Esophagus muscularis mucosa (tissue), 4 donors: ENCODE measurements at regions of chr12 and their contacts with region 1.

Region 1: DNA sequence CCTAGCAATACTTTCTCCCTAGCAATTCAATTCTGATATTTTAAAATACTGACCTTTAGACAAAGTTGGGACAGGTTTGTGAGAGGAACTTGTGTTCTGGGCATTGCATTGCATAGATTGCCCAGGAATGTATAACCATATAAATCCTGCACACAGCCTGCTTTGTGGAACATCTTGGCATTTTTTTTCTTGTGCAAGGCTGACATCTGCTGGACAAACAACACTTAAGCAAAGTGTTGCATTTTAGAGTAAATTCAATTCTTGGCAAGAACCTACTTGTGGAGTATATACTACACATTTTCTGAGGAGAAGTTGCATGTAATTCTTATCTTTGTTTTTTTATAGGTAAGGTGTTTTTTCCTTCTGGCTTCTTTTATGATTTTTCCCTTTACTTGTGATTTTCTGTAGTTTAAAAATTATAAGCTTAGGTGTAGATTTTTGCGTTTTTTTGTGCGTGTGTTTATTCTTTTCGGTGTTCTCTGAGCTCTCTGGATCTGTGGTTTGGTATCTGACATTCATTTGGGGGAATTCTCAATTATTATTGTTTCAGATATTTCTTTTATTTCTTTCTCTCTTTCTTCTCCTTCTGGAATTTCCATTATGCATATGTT is 26.4 kb downstream of the TESPA1 start:
- DNase-seq: no peak
- H3K4me3 ChIP-seq: no peak overlapping the region
- H3K27ac ChIP-seq: no peak overlapping the region
- H3K4me1 ChIP-seq: no peaks in the 10 kb centered on the region
- H3K27me3 ChIP-seq: peaks cover 0 to 3% (median 0%) of the 10 kb centered on the region in 4 donors
- CTCF ChIP-seq: peak; percentile 62 to 67 (median 63)
- EP300 ChIP-seq: no peak
- POLR2A ChIP-seq: no peak

Region 2: DNA sequence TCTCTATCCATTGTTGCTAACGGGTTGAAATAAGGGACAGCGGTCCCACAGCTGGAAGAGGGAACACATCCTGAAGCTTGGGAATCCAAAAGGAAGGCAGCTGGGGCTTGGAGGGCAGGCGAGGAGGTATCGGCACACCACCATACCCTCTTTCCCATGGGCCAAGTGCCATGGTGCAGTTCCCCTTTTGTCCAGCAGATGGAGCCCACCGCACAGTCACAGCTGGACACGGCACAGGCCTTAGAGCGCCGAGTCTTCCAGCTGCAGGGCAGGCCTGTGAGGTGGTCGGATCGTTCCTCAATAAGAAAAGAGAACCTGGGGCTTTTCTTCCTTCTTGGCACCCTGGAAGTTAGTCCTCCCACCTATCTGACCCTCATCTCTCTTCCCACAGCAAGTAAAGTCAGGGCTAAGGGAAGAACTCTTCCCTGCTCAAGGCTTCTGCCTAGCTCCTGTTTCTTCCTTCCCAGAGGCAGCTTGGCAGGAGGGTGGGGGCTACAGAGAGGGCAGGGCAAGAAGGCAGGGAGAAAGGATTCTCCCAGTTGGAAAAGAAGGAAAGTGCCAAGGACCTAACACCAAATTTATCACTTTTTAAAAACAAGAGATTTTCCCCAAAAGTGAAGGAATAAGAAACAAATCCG is 378.3 kb before region 1 on chr12:
- intact Hi-C with region 1: loop called (anchors 5 kb)
- DNase-seq: peak; percentile 98
- H3K4me3 ChIP-seq: no peak overlapping the region
- H3K27ac ChIP-seq: peak overlapping the region in 2 of 4 donors; percentile 4 to 13
- H3K4me1 ChIP-seq: peaks cover 0 to 12% (median 9%) of the 10 kb centered on the region in 4 donors
- H3K27me3 ChIP-seq: no peaks in the 10 kb centered on the region
- CTCF ChIP-seq: peak in 2 of 3 experiments; percentile 98 to 99
- EP300 ChIP-seq: no peak
- POLR2A ChIP-seq: no peak

Region 3: DNA sequence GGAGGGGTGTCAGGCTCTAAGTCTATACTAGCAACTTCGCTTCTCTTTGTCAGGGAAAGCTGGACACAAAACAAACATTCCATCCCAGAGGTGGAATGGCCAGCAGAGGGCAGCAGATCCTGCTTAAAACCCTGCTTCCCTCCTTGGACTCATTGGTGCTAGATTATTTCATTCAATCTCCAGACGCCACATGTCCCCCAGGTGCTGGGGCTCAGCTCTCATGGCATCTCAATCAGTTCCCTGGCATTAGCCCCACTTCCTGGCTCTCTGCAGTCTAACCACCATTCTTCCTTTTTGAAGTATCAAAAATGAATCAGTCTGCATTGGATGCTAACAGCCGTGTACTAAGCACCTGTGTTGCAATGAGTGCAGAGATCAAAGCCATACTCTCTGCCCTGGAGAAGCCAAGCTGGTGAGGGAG is 361.6 kb before region 1 on chr12:
- intact Hi-C with region 1: loop called (anchors 5 kb)
- DNase-seq: no peak
- H3K4me3 ChIP-seq: no peak overlapping the region
- H3K27ac ChIP-seq: no peak overlapping the region
- H3K4me1 ChIP-seq: peaks cover 1 to 7% (median 2%) of the 10 kb centered on the region in 4 donors
- H3K27me3 ChIP-seq: no peaks in the 10 kb centered on the region
- CTCF ChIP-seq: peak; percentile 71 to 94 (median 72)
- EP300 ChIP-seq: no peak
- POLR2A ChIP-seq: no peak

Region 4: DNA sequence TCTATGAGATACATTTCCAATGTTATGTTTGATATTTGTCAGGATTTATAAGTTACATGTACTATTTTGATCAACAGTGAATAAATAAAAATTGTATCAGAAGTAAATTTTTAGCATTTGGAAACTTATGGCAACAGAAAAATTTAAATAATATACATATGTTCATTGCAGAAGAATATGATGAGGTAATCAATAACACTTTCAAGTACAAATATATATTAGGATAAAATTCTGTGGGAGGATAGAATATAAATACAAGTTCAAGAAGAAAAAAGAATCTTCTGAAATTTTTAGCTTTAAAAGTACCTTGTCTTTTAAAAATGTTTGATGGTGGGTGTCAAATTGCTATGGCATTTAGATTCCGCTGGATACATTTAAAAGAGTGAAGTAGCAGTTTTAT is 206.7 kb before region 1 on chr12:
- intact Hi-C with region 1: loop called (anchors 5 kb)
- DNase-seq: no peak
- H3K4me3 ChIP-seq: no peak overlapping the region
- H3K27ac ChIP-seq: no peak overlapping the region
- H3K4me1 ChIP-seq: no peaks in the 10 kb centered on the region
- H3K27me3 ChIP-seq: no peaks in the 10 kb centered on the region
- CTCF ChIP-seq: no peak
- EP300 ChIP-seq: no peak
- POLR2A ChIP-seq: no peak